ENCODE measurements at regions of chr14 and their contacts with region 1.

Region 1: GRCh38 chr14:89915114-89915878 is 39.2 kb downstream of the EFCAB11 start:
- DNase-seq: peak in 2 of 3 donors; percentile 29 to 60
- ATAC-seq: peak; percentile 60 to 66
- H3K4me3 ChIP-seq: no peak overlapping the region
- H3K27ac ChIP-seq: no peak overlapping the region
- H3K4me1 ChIP-seq: no peaks in the 10 kb centered on the region
- H3K27me3 ChIP-seq: no peaks in the 10 kb centered on the region

Region 2: DNA sequence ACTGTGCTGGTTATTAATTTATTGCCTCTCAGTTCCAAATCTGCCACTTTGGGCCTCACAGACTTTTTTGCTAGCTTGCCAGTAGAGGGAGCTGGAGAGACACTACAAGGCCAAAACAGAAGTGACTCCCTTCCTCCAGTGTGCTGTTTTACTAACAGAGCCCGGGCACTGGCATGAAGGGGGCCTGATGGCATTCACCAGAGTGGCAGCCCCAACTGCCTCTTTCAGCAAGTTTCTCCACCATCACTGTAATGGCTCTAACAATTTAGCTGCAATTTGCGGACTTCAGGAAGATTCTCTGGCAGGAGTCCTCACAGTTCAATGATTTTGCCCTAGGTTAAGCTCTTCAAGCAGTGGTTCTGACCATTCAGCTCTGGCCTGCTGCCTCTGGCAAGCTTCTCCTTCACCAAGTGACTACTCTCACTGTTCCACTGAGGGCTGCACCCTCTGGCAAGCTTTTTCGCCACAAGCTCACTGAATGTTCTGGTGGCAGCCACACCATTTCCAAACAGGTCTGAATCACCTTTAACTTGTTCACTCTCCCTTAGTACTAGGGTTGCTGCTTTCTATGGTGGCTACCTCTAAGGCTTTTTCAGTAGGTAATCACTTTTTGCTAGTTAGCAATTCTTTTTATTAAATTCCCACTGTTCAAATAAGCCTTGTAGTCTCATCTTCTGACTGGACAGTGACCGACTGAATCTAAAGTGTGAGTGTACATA is 1247.6 kb before region 1 on chr14:
- intact Hi-C with region 1: loop called in 1 of 4 experiments (anchors 5 kb)
- DNase-seq: peak; percentile 32 to 63 (median 49)
- ATAC-seq: peak; percentile 79 to 88
- H3K4me3 ChIP-seq: no peak overlapping the region
- H3K27ac ChIP-seq: no peak overlapping the region
- H3K4me1 ChIP-seq: no peaks in the 10 kb centered on the region
- H3K27me3 ChIP-seq: no peaks in the 10 kb centered on the region

Region 3: DNA sequence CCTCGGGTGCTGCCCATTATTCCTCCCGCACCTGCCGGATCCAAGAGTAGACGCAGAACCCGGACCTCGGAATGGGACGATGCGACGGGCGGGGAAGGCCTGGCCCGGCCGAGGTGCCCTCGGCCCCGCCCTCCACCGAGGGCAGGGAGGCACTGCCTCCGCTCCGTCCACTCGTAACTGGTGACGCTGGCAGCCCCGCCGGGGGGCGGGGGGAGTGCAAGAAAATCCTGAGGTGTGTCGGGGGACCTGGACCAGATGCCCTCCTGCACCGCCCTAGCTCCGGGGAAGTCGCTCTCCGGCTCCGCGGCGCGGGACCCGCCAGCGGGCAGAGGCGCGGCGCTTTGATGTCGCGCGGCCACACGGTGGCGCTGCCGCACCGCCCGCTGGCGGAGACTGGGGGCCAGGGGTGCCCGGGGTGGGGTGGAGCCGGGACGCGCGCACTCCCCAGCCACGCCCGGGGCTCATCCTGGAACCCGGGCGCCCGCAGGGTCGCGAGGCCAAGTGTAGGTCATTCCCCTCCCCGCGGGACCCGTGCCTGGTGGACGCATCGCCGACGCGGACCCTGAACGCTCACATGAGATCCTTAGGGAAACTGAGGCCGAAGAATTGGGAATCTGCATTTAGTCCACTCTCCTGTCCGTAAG is 888.1 kb before region 1 on chr14:
- intact Hi-C with region 1: loop called in 3 of 4 experiments (anchors 5 to 10 kb)
- DNase-seq: peak; percentile 59 to 85 (median 80)
- ATAC-seq: peak; percentile 90 to 93
- H3K4me3 ChIP-seq: peak overlapping the region; percentile 57
- H3K27ac ChIP-seq: no peak overlapping the region
- H3K4me1 ChIP-seq: no peaks in the 10 kb centered on the region
- H3K27me3 ChIP-seq: no peaks in the 10 kb centered on the region

Region 4: GRCh38 chr14:89033756-89034155 is 881.5 kb before region 1 on chr14:
- intact Hi-C with region 1: loop called in 3 of 4 experiments (anchors 5 to 10 kb)
- DNase-seq: no peak
- ATAC-seq: peak in 1 of 2 donors; percentile 63
- H3K4me3 ChIP-seq: no peak overlapping the region
- H3K27ac ChIP-seq: no peak overlapping the region
- H3K4me1 ChIP-seq: no peaks in the 10 kb centered on the region
- H3K27me3 ChIP-seq: no peaks in the 10 kb centered on the region

Region 5: GRCh38 chr14:89040460-89041259 is 874.6 kb before region 1 on chr14:
- intact Hi-C with region 1: loop called (anchors 5 to 10 kb)
- DNase-seq: peak; percentile 91 to 95 (median 94)
- ATAC-seq: peak; percentile 94 to 97
- H3K4me3 ChIP-seq: peak overlapping the region; percentile 23
- H3K27ac ChIP-seq: peak overlapping the region; percentile 79
- H3K4me1 ChIP-seq: peaks cover 6% of the 10 kb centered on the region
- H3K27me3 ChIP-seq: no peaks in the 10 kb centered on the region

Region 6: DNA sequence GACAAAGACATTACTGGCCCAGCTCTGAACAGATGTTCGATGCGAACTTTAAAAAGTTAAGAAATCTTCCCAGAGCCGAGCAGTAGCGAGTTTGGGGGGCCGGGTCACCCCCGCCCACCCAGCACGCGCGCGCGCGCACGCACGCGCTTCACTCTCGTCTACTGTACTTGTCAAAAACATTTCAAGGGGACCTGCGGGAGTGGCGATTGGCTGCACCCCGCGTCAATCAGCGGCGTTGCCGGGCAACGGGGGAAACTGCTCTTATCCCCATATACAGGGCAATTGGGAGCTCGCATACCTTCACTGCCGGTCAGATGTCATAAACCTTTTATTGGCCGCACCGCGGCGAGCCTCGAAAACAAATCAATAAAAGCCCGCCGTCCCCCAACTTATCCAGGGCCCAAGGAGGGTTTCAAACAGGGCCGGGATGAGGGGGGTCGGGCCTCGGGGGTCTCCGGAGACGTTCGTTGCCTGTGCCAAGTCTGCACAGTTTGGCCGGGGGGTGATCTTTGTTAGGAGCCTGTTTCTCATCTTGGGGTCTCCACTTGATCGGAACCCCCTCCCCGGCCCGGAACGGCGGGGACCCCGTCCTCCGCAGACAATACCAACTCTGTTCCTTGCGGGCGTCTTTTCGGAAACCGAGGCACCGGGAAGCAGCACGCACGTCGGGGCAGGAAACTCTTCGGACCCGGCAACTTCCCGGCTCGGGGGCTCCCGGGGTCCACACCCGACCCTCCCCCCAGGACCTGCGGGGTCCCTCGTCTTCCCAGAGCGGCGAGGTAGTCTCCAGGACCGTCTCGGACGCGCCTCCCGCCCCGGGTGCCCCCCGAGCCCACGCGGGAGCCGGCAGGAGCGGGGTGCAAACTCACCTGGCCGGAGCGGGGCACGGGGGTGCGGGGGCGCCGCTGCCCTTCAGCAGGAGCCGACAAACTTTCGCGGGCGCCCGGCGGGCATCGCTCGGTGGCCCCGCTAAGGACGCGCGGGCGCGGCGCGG is 499.0 kb before region 1 on chr14:
- intact Hi-C with region 1: loop called in 1 of 4 experiments (anchors 10 kb)
- DNase-seq: peak; percentile 98 to 100 (median 98)
- ATAC-seq: peak; percentile 91
- H3K4me3 ChIP-seq: peak overlapping the region; percentile 98
- H3K27ac ChIP-seq: peak overlapping the region; percentile 82
- H3K4me1 ChIP-seq: peaks cover 5% of the 10 kb centered on the region
- H3K27me3 ChIP-seq: no peaks in the 10 kb centered on the region

Region 7: GRCh38 chr14:89720741-89721315 is 194.5 kb before region 1 on chr14:
- intact Hi-C with region 1: no loop called
- DNase-seq: peak in 2 of 3 donors; percentile 58 to 60
- ATAC-seq: peak; percentile 74 to 81
- H3K4me3 ChIP-seq: no peak overlapping the region
- H3K27ac ChIP-seq: no peak overlapping the region
- H3K4me1 ChIP-seq: peaks cover 3% of the 10 kb centered on the region
- H3K27me3 ChIP-seq: no peaks in the 10 kb centered on the region